ENCODE measurements at regions of chr12 and their contacts with region 1.

Region 1: DNA sequence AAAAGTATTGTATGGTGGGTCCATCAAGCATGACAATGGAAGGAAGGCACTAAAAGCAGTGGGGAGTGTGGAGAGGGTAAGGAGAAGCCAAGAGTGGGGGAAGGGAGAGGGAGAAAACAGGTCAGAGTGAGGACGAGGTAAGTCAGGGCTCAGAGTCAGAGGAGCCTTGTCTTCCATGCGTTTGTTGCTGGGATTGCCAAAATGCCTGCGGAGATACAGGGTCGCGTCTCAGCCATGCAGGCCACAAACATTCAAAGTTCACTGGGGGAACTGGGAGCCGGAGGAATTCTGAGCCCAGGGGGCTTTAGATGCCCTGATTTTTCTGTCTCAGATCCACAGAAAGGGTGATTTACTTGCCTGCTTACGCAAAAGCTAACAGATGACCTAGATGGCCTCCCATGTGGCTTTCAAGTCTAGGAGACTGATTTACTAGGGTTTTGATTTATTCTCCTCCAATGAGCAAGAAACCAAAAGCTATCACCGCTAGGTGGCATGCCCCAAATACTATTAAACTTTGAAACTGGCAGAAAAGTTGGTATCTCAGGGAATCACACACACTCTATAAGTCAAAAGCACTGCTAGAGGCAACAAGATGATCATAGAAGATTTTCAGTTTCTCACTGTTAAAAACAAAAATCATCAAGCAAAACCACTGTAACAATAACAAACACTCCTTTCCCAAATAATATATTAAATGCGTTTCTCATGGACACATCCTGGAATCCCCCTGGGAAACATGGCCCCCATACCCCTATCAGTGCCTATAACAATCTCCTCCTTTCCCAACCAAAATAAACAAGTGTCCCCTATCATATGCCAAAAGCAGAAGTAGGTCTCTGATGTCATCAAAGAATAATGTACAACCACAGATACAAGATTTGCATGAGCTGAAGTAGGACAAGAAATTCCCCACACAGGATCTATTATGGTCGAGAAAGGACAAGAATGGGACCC is 26.6 kb upstream of the MDM1 start:
- DNase-seq: no peak
- ATAC-seq: peak; percentile 85

Region 2: DNA sequence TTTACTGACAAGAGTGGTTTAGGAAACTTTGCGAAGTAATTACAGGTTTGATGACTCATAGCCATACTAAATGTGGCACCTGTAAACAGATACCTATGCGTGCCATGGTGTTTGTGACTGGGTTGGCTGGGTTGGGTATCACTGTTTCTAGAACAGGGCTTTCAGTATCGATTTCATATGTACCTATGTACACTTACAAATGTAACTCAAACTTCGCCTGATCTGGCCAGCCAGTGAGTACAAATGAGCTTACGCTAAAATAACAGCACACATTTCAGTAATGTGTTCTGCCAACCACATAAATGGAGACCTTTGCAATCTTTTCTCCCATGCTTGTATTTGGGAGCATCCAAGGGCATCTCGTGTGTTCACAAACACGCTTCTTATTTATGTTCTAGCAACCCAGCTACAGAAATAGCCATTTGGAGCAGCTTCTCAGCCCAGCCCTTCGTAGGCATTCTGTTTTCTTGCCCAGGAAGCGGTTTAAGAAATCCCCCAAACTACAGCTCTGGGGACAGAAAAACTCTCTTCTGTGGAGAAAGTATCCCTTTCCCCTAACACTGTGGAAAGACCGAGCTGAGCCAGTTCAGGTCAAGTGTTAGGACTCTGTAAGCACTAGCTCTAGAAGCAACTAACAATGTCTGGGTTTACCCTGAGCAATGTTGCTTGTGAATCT is 15.6 kb after region 1 on chr12:
- intact Hi-C with region 1: no loop called
- DNase-seq: no peak
- ATAC-seq: no peak

Region 3: GRCh38 chr12:68610370-68611093 is 251.7 kb after region 1 on chr12 and contains the start of gene RAP1B:
- intact Hi-C with region 1: loop called (anchors 2 kb)
- DNase-seq: peak; percentile 95
- ATAC-seq: peak; percentile 97
- total RNA-seq, gene RAP1B: 51.8 TPM

Region 4: DNA sequence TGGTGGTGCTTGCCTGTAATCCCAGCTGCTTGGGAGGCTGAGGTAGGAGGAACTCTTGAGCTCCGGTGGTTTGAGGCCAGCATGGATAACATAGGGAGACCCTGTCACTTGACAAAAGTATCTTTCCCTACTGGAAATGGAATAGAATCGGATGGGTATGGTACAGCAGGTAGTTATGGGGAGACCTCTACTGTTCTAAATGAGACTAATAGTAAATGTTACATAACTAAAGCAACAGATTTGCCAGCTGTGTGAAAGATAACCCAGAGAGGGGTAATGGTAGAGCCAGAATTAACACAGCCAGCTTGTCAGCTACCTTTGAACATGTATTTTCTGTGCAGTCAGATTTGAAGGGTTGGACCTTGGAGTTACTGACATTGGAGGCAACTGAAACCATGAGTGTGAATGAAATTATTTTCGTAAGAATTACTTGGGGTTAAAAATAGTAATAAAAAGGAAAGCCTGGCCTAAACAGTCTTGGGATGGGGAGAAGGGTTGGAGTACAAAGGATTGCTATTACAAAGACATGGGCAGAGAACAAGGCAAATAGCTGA is 306.3 kb after region 1 on chr12:
- intact Hi-C with region 1: loop called (anchors 5 kb)
- DNase-seq: no peak
- ATAC-seq: peak; percentile 85